ENCODE measurements at regions of chr10 and their contacts with region 1.

Region 1: GRCh38 chr10:110497438-110498086 is at the start of gene DUSP5:
- DNase-seq: peak; percentile 92
- H3K4me3 ChIP-seq: peak within 1 kb of the TSS; percentile 52 to 59
- H3K27ac ChIP-seq: peak within 1 kb of the TSS; percentile 79 to 86
- H3K4me1 ChIP-seq: no peaks in the 10 kb centered on the region
- H3K27me3 ChIP-seq: no peaks in the 10 kb centered on the region
- CTCF ChIP-seq: peak in 1 of 4 experiments; percentile 25
- POLR2A ChIP-seq: peak; percentile 98
- total RNA-seq, gene DUSP5: 6.9 to 33.1 TPM

Region 2: DNA sequence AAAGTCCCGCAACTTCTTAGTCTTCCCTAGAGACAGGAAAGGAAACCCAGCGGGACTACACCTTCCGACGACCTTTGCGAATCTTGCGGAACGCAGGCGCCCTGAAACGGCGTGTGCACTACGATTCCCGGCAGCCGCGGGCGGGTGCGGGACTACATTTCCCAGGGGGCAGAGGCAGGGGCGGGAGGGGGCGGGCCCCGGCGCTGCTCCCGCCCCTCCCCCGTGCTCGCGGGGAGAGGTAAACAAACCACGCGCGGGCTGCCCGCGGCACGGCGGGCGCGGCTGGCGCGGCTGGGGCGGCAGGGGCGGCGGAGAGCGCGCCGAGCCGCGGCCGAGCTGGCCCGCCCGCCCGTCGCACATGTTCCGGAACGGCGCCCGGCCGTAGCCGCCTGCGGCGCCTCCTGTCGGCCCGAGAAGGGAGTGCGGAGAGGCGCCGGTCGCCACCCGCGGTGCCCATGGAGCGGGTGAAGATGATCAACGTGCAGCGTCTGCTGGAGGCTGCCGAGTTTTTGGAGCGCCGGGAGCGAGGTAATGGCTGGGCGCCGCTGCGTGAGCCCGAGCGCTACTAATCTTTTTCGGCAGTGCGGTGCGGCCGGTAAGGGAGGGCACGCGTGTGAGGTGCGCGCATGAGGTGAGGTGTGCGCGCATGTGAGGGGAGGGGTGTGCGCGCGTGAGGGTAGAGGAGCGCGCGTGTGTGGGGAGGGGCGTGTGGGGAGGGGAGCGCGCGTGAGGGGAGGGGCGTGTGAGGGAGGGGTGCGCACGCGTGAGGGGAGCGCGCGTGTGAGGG is 271.6 kb before region 1 on chr10:
- intact Hi-C with region 1: loop called (anchors 5 kb)
- DNase-seq: peak; percentile 90
- H3K4me3 ChIP-seq: peak overlapping the region; percentile 78 to 89
- H3K27ac ChIP-seq: peak overlapping the region; percentile 96
- H3K4me1 ChIP-seq: no peaks in the 10 kb centered on the region
- H3K27me3 ChIP-seq: no peaks in the 10 kb centered on the region
- CTCF ChIP-seq: peak; percentile 56 to 83 (median 75)
- POLR2A ChIP-seq: peak; percentile 36

Region 3: GRCh38 chr10:110304780-110305421 is 192.7 kb before region 1 on chr10 and contains the start of gene SMNDC1:
- intact Hi-C with region 1: loop called (anchors 1 kb)
- DNase-seq: peak; percentile 99
- H3K4me3 ChIP-seq: peak within 1 kb of the TSS; percentile 60 to 95
- H3K27ac ChIP-seq: peak within 1 kb of the TSS; percentile 88 to 89
- H3K4me1 ChIP-seq: peaks cover 6% of the 10 kb centered on the region
- H3K27me3 ChIP-seq: no peaks in the 10 kb centered on the region
- CTCF ChIP-seq: no peak
- POLR2A ChIP-seq: peak; percentile 73
- total RNA-seq, gene SMNDC1: 8.0 to 11.0 TPM

Region 4: GRCh38 chr10:110356628-110357245 is 140.8 kb before region 1 on chr10:
- intact Hi-C with region 1: loop called (anchors 5 kb)
- DNase-seq: peak; percentile 10
- H3K4me3 ChIP-seq: no peak overlapping the region
- H3K27ac ChIP-seq: no peak overlapping the region
- H3K4me1 ChIP-seq: no peaks in the 10 kb centered on the region
- H3K27me3 ChIP-seq: no peaks in the 10 kb centered on the region
- CTCF ChIP-seq: no peak
- POLR2A ChIP-seq: no peak

Region 5: GRCh38 chr10:110567201-110568054 is 69.9 kb after region 1 on chr10 and contains the start of gene SMC3:
- intact Hi-C with region 1: loop called (anchors 5 kb)
- DNase-seq: peak; percentile 83
- H3K4me3 ChIP-seq: peak within 1 kb of the TSS; percentile 67 to 94
- H3K27ac ChIP-seq: peak within 1 kb of the TSS; percentile 76 to 88
- H3K4me1 ChIP-seq: no peaks in the 10 kb centered on the region
- H3K27me3 ChIP-seq: no peaks in the 10 kb centered on the region
- CTCF ChIP-seq: no peak
- POLR2A ChIP-seq: peak; percentile 30
- total RNA-seq, gene SMC3: 25.6 to 38.8 TPM

Measured in prostate gland (tissue), 2 donors.